ENCODE measurements at regions of chr3 and their contacts with region 1.

Region 1: DNA sequence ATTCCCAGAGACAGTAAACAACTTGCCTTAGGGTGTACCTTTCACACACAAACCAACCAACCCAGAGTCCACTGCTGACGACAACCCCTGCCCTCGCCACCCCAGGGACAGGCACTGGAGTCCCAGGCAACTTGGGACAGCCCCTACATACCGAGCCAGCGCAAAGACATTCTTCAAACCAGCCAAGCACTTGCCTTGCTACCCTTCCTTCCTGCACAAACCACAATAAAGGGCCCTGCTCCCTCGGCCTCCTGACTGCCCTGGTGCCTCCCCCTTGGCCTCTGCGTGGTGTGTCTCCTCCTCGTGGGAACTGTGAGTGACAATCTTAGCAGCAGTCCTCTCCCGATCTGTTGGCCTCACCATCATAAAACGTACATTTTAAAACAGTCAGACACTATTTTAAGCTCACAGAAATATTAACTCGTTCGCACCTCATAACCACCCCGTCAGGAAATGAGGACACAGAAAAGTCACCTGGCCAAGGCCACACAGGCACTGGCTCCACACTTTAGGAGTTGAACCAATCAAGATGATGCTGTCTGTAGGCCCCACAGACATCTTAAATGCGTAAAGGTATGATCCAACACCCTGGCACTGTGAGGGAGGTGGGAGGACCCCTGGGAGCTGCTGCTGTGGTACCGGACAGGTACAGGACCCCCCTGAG is 113.8 kb downstream of the ADCY5 start:
- ATAC-seq: no peak
- H3K4me3 ChIP-seq: no peak overlapping the region
- H3K27ac ChIP-seq: no peak overlapping the region
- H3K4me1 ChIP-seq: peaks cover 0 to 6% of the 10 kb centered on the region in 2 donors

Region 2: GRCh38 chr3:123272547-123272946 is 62.6 kb before region 1 on chr3:
- in situ Hi-C with region 1: no loop called
- ATAC-seq: peak in 6 of 8 experiments; percentile 14 to 72 (median 35)
- H3K4me3 ChIP-seq: no peak overlapping the region
- H3K27ac ChIP-seq: no peak overlapping the region
- H3K4me1 ChIP-seq: no peaks in the 10 kb centered on the region

Region 3: DNA sequence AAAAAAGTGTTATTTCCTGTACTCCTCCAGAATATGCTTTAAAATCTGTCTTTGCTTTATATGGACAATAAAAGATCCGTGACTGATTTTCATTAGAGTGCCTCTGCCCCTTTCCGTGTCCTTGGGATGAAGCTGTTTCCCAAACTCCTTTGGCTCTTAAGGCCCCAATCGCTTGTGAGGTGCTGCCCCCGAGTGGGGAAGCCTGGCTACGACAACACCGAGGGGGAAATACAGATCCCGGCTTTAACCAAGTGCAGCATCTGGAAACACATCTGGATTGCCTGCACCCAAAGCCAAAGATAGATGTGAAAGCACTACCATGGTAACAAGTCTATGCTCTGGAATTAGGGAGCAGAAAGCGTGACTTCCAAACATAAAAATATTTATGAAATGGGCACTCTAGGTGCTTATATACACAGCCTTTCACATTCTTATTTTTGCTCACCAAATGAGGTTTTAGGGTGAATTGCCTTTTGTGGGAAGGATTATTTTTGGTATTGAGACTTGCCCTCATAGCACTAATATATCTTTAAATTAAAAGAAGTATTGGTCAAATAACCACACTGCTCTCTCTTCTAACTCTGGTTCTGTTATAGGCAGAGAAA is 154.4 kb after region 1 on chr3:
- in situ Hi-C with region 1: loop called in 3 of 9 experiments (anchors 10 to 25 kb)
- ATAC-seq: peak; percentile 75 to 90 (median 86)
- H3K4me3 ChIP-seq: no peak overlapping the region
- H3K27ac ChIP-seq: no peak overlapping the region
- H3K4me1 ChIP-seq: peaks cover 0 to 5% of the 10 kb centered on the region in 2 donors

Region 4: GRCh38 chr3:123773681-123774431 is 438.7 kb after region 1 on chr3:
- in situ Hi-C with region 1: no loop called
- ATAC-seq: peak; percentile 78 to 95 (median 86)
- H3K4me3 ChIP-seq: no peak overlapping the region
- H3K27ac ChIP-seq: no peak overlapping the region
- H3K4me1 ChIP-seq: peaks cover 5 to 11% of the 10 kb centered on the region in 2 donors

Measured in motor neuron (in vitro differentiated cells).